ENCODE measurements at regions of chr2 and their contacts with region 1.

Region 1: GRCh38 chr2:240566203-240567136 is 1.8 kb upstream of the RNPEPL1 start:
- DNase-seq: peak in 1 of 2 experiments; percentile 87
- H3K4me3 ChIP-seq: peak overlapping the region in 2 of 4 experiments; percentile 19 to 49; a peak in 5 of 8 replicates
- H3K27ac ChIP-seq: no peak overlapping the region
- H3K4me1 ChIP-seq: peaks cover 0 to 30% (median 21%) of the 10 kb centered on the region in 4 experiments; a peak in 6 of 7 replicates
- H3K27me3 ChIP-seq: peaks cover 18 to 34% (median 30%) of the 10 kb centered on the region in 4 experiments
- CTCF ChIP-seq: peak in 2 of 3 experiments; percentile 65 to 76; a peak in 3 of 4 replicates
- EP300 ChIP-seq: no peak
- POLR2A ChIP-seq: no peak
- RAD21 ChIP-seq: no peak; a peak in 1 of 4 replicates

Region 2: DNA sequence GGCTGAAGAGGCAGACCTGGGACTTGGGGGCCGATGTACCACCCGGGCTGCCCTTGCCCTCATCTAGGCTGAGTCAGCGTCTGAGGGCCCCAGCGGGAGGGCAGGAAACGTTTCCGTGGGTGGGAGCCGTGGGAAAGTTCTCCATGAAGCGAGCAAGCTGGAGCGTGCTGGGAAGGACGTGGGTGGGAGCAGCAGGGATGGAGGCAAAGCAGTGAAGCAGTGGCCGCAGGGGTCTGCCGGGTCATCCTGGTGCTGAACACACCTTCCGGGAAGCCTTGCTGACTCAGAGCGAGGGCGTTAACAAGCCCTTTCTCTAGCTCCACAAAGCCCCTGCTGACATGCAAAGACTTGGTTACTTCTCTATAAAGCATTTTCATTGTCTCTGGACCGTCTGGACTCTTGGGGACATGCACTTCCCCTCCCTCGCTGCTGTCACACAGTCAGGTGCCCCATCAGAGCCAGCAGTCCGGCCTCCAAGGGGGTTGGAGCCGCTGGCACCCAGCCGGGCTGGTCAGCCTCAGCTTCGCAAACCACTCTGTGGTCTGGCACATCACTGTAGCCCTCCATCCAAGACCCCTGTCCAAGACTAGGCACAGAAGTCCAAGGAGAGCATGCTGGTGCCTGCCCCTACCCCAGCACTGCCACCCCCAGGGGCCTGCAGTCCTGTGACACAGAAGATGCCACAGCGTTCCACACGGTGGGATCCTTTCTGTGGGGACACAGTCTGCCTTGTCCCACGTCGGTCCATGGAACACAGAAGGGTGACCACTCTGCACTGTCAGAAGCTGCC is 246.1 kb before region 1 on chr2:
- CTCF ChIA-PET with region 1: no interaction called
- POLR2A ChIA-PET with region 1: no interaction called
- DNase-seq: peak in 1 of 2 experiments; percentile 23
- H3K4me3 ChIP-seq: no peak overlapping the region
- H3K27ac ChIP-seq: no peak overlapping the region
- H3K4me1 ChIP-seq: peaks cover 0 to 9% (median 0%) of the 10 kb centered on the region in 4 experiments; a peak in 1 of 7 replicates
- H3K27me3 ChIP-seq: no peaks in the 10 kb centered on the region
- CTCF ChIP-seq: no peak
- EP300 ChIP-seq: no peak
- POLR2A ChIP-seq: no peak
- RAD21 ChIP-seq: no peak

Region 3: DNA sequence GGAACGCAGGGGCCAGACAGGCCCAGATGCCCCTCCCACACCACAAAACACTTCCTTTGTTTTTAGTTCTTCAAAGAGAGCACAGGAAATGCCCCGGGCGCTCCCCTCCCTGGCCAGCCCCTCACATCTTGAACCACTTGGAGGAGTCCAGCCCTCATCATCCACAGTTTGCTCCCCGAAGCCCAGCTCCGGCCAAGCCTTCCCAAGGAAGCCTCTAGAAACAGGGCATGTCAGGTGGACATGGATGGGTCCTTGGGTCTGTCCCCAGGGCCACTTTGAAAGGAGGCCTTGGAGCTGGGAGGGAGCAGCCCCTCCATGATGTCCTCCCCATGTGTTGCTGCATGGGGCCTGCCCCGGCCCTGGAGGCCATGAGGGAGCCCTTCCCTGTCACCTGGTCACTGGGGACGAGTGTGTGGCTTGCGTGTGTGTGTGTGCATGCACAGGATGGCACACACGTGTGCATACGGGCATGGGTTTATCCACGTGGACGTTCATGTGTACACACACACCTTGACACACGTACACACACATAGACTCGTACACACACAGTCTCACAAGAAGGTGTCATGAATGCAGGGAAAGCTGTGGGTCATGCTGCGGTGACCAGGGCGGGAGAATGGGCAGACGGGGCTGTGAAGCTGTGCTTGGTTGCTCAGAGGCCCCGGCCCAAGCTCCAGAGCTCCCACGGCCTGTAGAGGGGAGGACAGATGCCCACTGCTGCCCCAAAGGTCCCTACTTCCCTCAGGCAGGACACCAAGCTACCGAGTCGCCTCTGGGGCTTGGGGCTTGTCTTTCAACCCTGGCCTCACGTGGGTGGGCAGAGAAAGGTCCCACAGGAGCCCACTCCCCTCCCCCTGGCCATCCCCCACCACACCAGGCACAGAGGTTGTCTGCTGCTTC is 173.5 kb before region 1 on chr2:
- CTCF ChIA-PET with region 1: no interaction called
- POLR2A ChIA-PET with region 1: no interaction called
- DNase-seq: no peak
- H3K4me3 ChIP-seq: no peak overlapping the region
- H3K27ac ChIP-seq: no peak overlapping the region
- H3K4me1 ChIP-seq: no peaks in the 10 kb centered on the region
- H3K27me3 ChIP-seq: no peaks in the 10 kb centered on the region
- CTCF ChIP-seq: no peak
- EP300 ChIP-seq: no peak
- POLR2A ChIP-seq: no peak
- RAD21 ChIP-seq: no peak

Region 4: GRCh38 chr2:240472078-240472790 is 94.2 kb before region 1 on chr2:
- CTCF ChIA-PET with region 1: no interaction called
- POLR2A ChIA-PET with region 1: no interaction called
- DNase-seq: no peak
- H3K4me3 ChIP-seq: no peak overlapping the region
- H3K27ac ChIP-seq: no peak overlapping the region
- H3K4me1 ChIP-seq: no peaks in the 10 kb centered on the region
- H3K27me3 ChIP-seq: peaks cover 0 to 5% (median 4%) of the 10 kb centered on the region in 4 experiments; a peak in 3 of 7 replicates
- CTCF ChIP-seq: no peak
- EP300 ChIP-seq: no peak
- POLR2A ChIP-seq: no peak
- RAD21 ChIP-seq: no peak

Region 5: GRCh38 chr2:240528406-240529040 is 37.9 kb before region 1 on chr2:
- CTCF ChIA-PET with region 1: no interaction called
- POLR2A ChIA-PET with region 1: no interaction called
- DNase-seq: no peak
- H3K4me3 ChIP-seq: no peak overlapping the region
- H3K27ac ChIP-seq: no peak overlapping the region
- H3K4me1 ChIP-seq: no peaks in the 10 kb centered on the region
- H3K27me3 ChIP-seq: no peaks in the 10 kb centered on the region
- CTCF ChIP-seq: no peak
- EP300 ChIP-seq: no peak
- POLR2A ChIP-seq: no peak
- RAD21 ChIP-seq: no peak

Region 6: GRCh38 chr2:240579771-240580614 is 13.5 kb after region 1 on chr2:
- CTCF ChIA-PET with region 1: interaction called, 37 read pairs
- POLR2A ChIA-PET with region 1: interaction called, 21 read pairs
- DNase-seq: peak in 1 of 2 experiments; percentile 74
- H3K4me3 ChIP-seq: no peak overlapping the region
- H3K27ac ChIP-seq: no peak overlapping the region
- H3K4me1 ChIP-seq: peaks cover 0 to 12% (median 1%) of the 10 kb centered on the region in 4 experiments; a peak in 6 of 7 replicates
- H3K27me3 ChIP-seq: no peaks in the 10 kb centered on the region
- CTCF ChIP-seq: peak in 2 of 3 experiments; percentile 76 to 86; a peak in 3 of 4 replicates
- EP300 ChIP-seq: no peak
- POLR2A ChIP-seq: no peak
- RAD21 ChIP-seq: peak; percentile 19 to 52; a peak in 3 of 4 replicates

Region 7: GRCh38 chr2:240586198-240586918 is 19.9 kb after region 1 on chr2 and contains the start of gene CAPN10:
- CTCF ChIA-PET with region 1: interaction called, 37 read pairs
- POLR2A ChIA-PET with region 1: interaction called, 21 read pairs
- DNase-seq: peak in 1 of 2 experiments; percentile 97
- H3K4me3 ChIP-seq: peak within 1 kb of the TSS; percentile 94 to 97 (median 95)
- H3K27ac ChIP-seq: no peak within 1 kb of the TSS
- H3K4me1 ChIP-seq: peaks cover 0 to 14% (median 11%) of the 10 kb centered on the region in 4 experiments; a peak in 6 of 7 replicates
- H3K27me3 ChIP-seq: no peaks in the 10 kb centered on the region
- CTCF ChIP-seq: no peak; a peak in 1 of 4 replicates
- EP300 ChIP-seq: no peak
- POLR2A ChIP-seq: no peak
- RAD21 ChIP-seq: no peak
- total RNA-seq, gene CAPN10: 39.8 and 40.7 TPM in 2 replicates